H1 (cell line): ENCODE measurements at regions of chr17 and their contacts with region 1.

Region 1: DNA sequence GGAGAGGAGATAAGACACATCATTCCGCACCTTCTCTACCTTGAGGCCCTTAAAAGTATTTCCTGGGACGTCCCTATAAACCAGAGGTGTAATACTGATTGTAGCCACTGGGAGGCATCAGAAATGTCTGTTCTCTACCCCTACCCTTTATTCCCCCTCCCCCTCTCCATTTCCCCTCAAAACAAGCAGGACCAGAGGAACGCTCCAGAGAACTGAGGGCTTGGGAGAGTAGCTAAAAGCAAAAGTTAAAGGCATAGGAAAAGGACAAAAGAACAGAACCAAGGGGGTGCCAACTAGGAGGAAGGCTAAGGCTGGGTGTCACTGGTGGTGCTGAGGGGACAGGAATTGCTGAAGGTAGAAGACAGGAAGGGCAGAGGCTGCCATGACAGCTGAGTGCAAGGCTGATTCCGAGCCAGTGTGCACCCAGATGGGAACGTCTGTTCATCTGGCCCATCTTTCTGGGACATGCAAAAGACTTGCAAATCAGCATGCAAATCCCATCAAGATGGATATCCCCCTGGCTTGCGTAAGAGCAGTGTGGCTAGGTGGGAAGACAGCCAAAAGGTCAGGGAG is 6.7 kb downstream of the CAMTA2 start:
- DNase-seq: peak in 1 of 2 experiments; percentile 73
- H3K4me3 ChIP-seq: no peak overlapping the region
- H3K27ac ChIP-seq: no peak overlapping the region
- H3K4me1 ChIP-seq: peaks cover 0 to 4% (median 3%) of the 10 kb centered on the region in 4 experiments; a peak in 3 of 7 replicates
- H3K27me3 ChIP-seq: peaks cover 0 to 20% (median 18%) of the 10 kb centered on the region in 4 experiments; a peak in 6 of 7 replicates
- CTCF ChIP-seq: peak in 2 of 3 experiments; percentile 63 to 80; a peak in 3 of 4 replicates
- EP300 ChIP-seq: no peak
- POLR2A ChIP-seq: no peak
- RAD21 ChIP-seq: peak; percentile 61 to 69

Region 2: DNA sequence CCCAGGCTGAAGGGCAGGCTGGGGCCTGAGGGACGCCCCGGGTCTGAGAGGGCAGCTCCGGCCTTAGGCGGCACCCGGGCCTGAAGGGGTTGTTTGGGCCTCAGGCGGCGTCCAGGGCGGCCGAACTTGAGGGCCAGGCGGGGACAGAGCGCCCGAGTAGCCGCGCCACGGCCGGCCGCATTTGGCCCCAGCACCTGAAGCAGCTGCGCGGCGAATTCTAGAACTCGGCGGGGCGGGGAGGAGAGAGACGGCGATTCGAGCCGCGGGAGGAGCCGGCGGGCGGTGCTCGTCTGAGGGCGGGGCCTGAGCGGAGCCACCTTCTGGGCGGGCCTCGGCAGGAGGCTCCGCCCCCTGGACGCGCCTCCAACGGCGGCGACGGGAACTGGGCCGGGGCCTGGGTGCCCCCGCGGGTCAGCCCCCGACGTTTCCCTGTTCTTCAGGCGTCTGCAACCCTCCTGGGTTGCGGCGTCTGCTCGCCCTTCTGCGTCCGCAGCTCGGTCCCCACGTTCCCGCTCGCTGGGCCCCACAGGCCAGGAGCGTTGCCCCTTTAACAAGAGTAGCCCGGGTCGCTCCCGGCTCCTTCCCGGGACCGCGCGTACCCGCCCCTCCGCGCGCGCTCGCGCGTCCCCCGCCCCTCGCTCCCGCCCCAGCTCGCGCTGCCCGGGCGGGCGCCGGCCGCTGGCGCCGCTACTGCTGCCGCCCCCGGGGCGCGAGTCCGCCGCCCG is 16.7 kb after region 1 on chr17 and contains the starts of genes INCA1 and KIF1C:
- CTCF ChIA-PET with region 1: interaction called, 43 read pairs
- POLR2A ChIA-PET with region 1: interaction called, 128 read pairs
- DNase-seq: peak; percentile 64 to 95
- H3K4me3 ChIP-seq: peak within 1 kb of the TSS; percentile 75 to 80 (median 78)
- H3K27ac ChIP-seq: peak within 1 kb of the TSS; percentile 88; the same call in 1 of the 2 replicates
- H3K4me1 ChIP-seq: peaks cover 4 to 17% (median 8%) of the 10 kb centered on the region in 4 experiments
- H3K27me3 ChIP-seq: peaks cover 0 to 13% (median 1%) of the 10 kb centered on the region in 4 experiments; a peak in 4 of 7 replicates
- CTCF ChIP-seq: no peak
- EP300 ChIP-seq: no peak; a peak in 1 of 3 replicates
- POLR2A ChIP-seq: no peak; a peak in 1 of 3 replicates
- RAD21 ChIP-seq: no peak
- total RNA-seq, gene INCA1: 1.1 and 1.4 TPM in 2 replicates
- total RNA-seq, gene KIF1C: 114 and 118 TPM in 2 replicates

Region 3: DNA sequence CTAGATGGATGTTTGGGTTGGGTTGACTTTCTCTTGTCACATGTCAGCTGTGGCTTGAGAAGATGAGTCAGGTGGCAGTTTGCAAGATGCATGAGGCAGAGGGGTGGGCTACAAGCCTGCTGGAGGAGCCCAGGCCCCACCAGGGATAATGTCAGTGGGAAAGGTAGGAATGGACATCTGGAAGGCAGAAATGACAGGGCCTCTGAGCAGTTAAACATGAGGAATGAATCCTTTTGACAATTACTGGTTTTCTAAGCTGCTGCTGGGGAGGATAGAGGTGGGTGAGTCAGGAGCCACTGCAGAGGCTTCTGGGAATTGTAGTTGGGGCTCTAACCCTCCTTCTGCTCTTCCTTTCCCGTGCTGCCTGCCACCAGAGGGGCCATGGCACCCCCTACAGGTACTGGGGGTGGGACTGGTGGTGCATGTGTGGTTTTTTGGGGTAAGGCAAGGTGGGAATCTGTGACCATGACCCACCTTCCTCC is 38.8 kb after region 1 on chr17:
- CTCF ChIA-PET with region 1: interaction called, 14 read pairs
- POLR2A ChIA-PET with region 1: interaction called, 6 read pairs
- DNase-seq: no peak
- H3K4me3 ChIP-seq: no peak overlapping the region
- H3K27ac ChIP-seq: no peak overlapping the region
- H3K4me1 ChIP-seq: no peaks in the 10 kb centered on the region
- H3K27me3 ChIP-seq: no peaks in the 10 kb centered on the region
- CTCF ChIP-seq: peak; percentile 39 to 50 (median 50)
- EP300 ChIP-seq: no peak
- POLR2A ChIP-seq: no peak
- RAD21 ChIP-seq: peak; percentile 52 to 67

Region 4: GRCh38 chr17:5031365-5032082 is 50.8 kb after region 1 on chr17:
- CTCF ChIA-PET with region 1: interaction called, 16 read pairs
- POLR2A ChIA-PET with region 1: interaction called, 3 read pairs
- DNase-seq: peak; percentile 47 to 94
- H3K4me3 ChIP-seq: peak overlapping the region; percentile 15 to 55 (median 28); a peak in 6 of 8 replicates
- H3K27ac ChIP-seq: no peak overlapping the region
- H3K4me1 ChIP-seq: no peaks in the 10 kb centered on the region; a peak in 1 of 7 replicates
- H3K27me3 ChIP-seq: peaks cover 0 to 14% (median 1%) of the 10 kb centered on the region in 4 experiments; a peak in 5 of 7 replicates
- CTCF ChIP-seq: peak; percentile 66 to 82 (median 72)
- EP300 ChIP-seq: no peak
- POLR2A ChIP-seq: no peak
- RAD21 ChIP-seq: peak; percentile 45 to 60

Region 5: GRCh38 chr17:5055543-5055942 is 74.8 kb after region 1 on chr17:
- CTCF ChIA-PET with region 1: interaction called, 39 read pairs
- POLR2A ChIA-PET with region 1: no interaction called
- DNase-seq: no peak
- H3K4me3 ChIP-seq: no peak overlapping the region
- H3K27ac ChIP-seq: no peak overlapping the region
- H3K4me1 ChIP-seq: no peaks in the 10 kb centered on the region
- H3K27me3 ChIP-seq: no peaks in the 10 kb centered on the region
- CTCF ChIP-seq: peak; percentile 41 to 58 (median 50); a peak in 3 of 4 replicates
- EP300 ChIP-seq: no peak
- POLR2A ChIP-seq: no peak
- RAD21 ChIP-seq: no peak